ENCODE measurements at regions of chr10 and their contacts with region 1.

Region 1: DNA sequence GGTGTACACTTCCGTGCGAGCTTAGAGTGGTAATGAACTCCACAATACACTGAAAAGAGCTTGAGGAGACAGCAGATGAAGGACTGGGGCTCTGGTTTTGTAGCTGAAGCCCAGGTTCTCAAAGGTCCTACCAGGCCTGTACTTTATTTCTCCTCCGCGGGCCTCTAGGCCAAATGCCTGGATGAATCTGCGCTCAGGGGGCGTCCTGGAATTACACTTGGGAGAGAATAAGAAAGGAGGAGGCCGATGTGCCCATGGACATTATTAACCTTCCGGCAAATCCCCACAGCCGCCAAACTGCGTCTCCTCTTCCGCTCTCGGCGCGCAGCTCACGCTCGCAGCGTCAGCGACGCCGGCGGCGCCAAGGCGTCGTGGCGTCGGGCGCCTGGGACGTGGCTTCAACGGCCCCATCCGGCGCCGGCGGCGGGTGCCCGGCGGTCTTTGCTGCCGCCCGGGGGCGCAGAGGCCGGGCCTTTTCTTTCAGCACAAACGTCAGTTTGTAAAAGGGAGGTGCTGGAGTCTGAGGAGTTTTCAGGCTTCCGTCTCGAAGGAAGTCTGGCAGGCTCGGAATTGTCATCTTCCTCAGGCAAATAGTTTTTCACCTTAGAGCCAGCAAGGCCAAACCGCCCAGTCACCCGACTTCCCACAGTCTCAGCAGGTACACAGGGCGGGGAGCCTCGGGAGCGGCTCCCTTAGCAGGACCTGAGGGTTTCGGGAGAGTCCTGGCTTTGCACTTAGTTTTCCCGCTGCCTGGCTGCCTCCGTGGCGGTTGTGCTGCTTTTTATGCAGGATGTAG is at the start of gene CCDC7:
- DNase-seq: peak; percentile 74 to 96 (median 82)
- ATAC-seq: peak; percentile 95
- H3K4me3 ChIP-seq: peak within 1 kb of the TSS; percentile 96
- H3K4me3 Mint-ChIP-seq: peak within 1 kb of the TSS; percentile 94
- H3K27ac ChIP-seq: peak within 1 kb of the TSS; percentile 92 to 95
- H3K27ac Mint-ChIP-seq: peak within 1 kb of the TSS; percentile 97
- H3K4me1 ChIP-seq: peaks cover 8% of the 10 kb centered on the region
- H3K4me1 Mint-ChIP-seq: peaks cover 33% of the 10 kb centered on the region
- H3K27me3 ChIP-seq: no peaks in the 10 kb centered on the region
- H3K27me3 Mint-ChIP-seq: no peaks in the 10 kb centered on the region
- CTCF ChIP-seq: peak; percentile 64
- total RNA-seq, gene CCDC7: 69.4 to 72.9 TPM

Region 2: GRCh38 chr10:32055813-32056600 is 389.9 kb before region 1 on chr10 and contains the start of gene KIF5B:
- CTCF ChIA-PET with region 1: no interaction called
- POLR2A ChIA-PET with region 1: no interaction called
- intact Hi-C with region 1: loop called in 1 of 2 experiments (anchors 10 kb)
- DNase-seq: peak; percentile 74 to 95 (median 84)
- ATAC-seq: peak; percentile 79
- H3K4me3 ChIP-seq: peak within 1 kb of the TSS; percentile 98
- H3K4me3 Mint-ChIP-seq: peak within 1 kb of the TSS; percentile 95
- H3K27ac ChIP-seq: peak within 1 kb of the TSS; percentile 77 to 92
- H3K27ac Mint-ChIP-seq: peak within 1 kb of the TSS; percentile 95
- H3K4me1 ChIP-seq: peaks cover 18% of the 10 kb centered on the region
- H3K4me1 Mint-ChIP-seq: peaks cover 54% of the 10 kb centered on the region
- H3K27me3 ChIP-seq: no peaks in the 10 kb centered on the region
- H3K27me3 Mint-ChIP-seq: no peaks in the 10 kb centered on the region
- CTCF ChIP-seq: no peak
- total RNA-seq, gene KIF5B: 58.3 to 59.0 TPM

Region 3: GRCh38 chr10:32155042-32155531 is 290.9 kb before region 1 on chr10:
- CTCF ChIA-PET with region 1: no interaction called
- POLR2A ChIA-PET with region 1: no interaction called
- intact Hi-C with region 1: no loop called
- DNase-seq: no peak
- ATAC-seq: no peak
- H3K4me3 ChIP-seq: no peak overlapping the region
- H3K4me3 Mint-ChIP-seq: no peak overlapping the region
- H3K27ac ChIP-seq: no peak overlapping the region
- H3K27ac Mint-ChIP-seq: no peak overlapping the region
- H3K4me1 ChIP-seq: peaks cover 11% of the 10 kb centered on the region
- H3K4me1 Mint-ChIP-seq: peaks cover 30% of the 10 kb centered on the region
- H3K27me3 ChIP-seq: no peaks in the 10 kb centered on the region
- H3K27me3 Mint-ChIP-seq: no peaks in the 10 kb centered on the region
- CTCF ChIP-seq: no peak

Region 4: GRCh38 chr10:32256613-32257437 is 189.1 kb before region 1 on chr10:
- CTCF ChIA-PET with region 1: interaction called, 3 read pairs
- POLR2A ChIA-PET with region 1: no interaction called
- intact Hi-C with region 1: loop called in 1 of 2 experiments (anchors 10 kb)
- DNase-seq: peak; percentile 43 to 84 (median 62)
- ATAC-seq: peak; percentile 78
- H3K4me3 ChIP-seq: no peak overlapping the region
- H3K4me3 Mint-ChIP-seq: no peak overlapping the region
- H3K27ac ChIP-seq: no peak overlapping the region
- H3K27ac Mint-ChIP-seq: no peak overlapping the region
- H3K4me1 ChIP-seq: peaks cover 9% of the 10 kb centered on the region
- H3K4me1 Mint-ChIP-seq: peaks cover 5% of the 10 kb centered on the region
- H3K27me3 ChIP-seq: no peaks in the 10 kb centered on the region
- H3K27me3 Mint-ChIP-seq: no peaks in the 10 kb centered on the region
- CTCF ChIP-seq: peak; percentile 92

Region 5: DNA sequence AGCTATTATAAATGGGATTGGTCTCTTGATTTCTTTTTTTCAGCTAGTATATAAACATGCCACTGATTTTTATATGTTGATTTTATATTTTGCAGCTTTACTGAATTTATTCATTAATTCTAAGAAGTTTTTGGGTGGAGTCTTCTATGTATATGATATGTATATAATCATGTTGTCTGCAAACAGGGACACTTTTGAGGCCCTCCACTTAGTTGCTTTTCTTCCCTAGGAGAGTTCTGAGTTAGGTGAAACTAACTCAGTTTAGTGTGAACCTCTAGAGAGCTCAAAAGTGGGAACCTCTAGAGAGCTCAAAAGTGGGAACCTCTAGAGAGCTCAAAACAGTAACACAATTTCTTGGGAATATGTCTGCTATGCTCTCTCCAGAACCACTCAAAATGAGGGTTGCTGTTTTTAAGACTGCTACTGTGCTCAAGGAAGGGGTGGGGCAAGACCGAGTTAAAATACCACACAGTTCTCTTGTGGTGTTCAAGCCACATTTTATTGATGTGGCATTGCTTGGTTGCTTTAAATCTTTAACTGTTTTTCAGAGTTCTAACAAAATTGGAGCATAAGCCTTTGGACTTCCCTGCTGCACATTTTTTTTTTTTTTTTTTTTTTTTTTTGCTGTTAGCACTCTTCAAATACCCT is 13.2 kb after region 1 on chr10:
- CTCF ChIA-PET with region 1: interaction called, 5 read pairs
- POLR2A ChIA-PET with region 1: interaction called, 42 read pairs
- intact Hi-C with region 1: loop called (anchors 1 to 2 kb)
- DNase-seq: peak in 13 of 14 experiments; percentile 23 to 90 (median 43)
- ATAC-seq: peak; percentile 99
- H3K4me3 ChIP-seq: peak overlapping the region; percentile 9
- H3K4me3 Mint-ChIP-seq: peak overlapping the region; percentile 85
- H3K27ac ChIP-seq: no peak overlapping the region
- H3K27ac Mint-ChIP-seq: peak overlapping the region; percentile 95
- H3K4me1 ChIP-seq: peaks cover 11% of the 10 kb centered on the region
- H3K4me1 Mint-ChIP-seq: peaks cover 60% of the 10 kb centered on the region
- H3K27me3 ChIP-seq: no peaks in the 10 kb centered on the region
- H3K27me3 Mint-ChIP-seq: no peaks in the 10 kb centered on the region
- CTCF ChIP-seq: no peak

Region 6: GRCh38 chr10:33487014-33487776 is 1041.3 kb after region 1 on chr10:
- CTCF ChIA-PET with region 1: no interaction called
- POLR2A ChIA-PET with region 1: no interaction called
- intact Hi-C with region 1: no loop called
- DNase-seq: peak in 1 of 14 experiments; percentile 43
- ATAC-seq: no peak
- H3K4me3 ChIP-seq: peak overlapping the region; percentile 28
- H3K4me3 Mint-ChIP-seq: peak overlapping the region; percentile 39
- H3K27ac ChIP-seq: no peak overlapping the region
- H3K27ac Mint-ChIP-seq: no peak overlapping the region
- H3K4me1 ChIP-seq: no peaks in the 10 kb centered on the region
- H3K4me1 Mint-ChIP-seq: peaks cover 11% of the 10 kb centered on the region
- H3K27me3 ChIP-seq: no peaks in the 10 kb centered on the region
- H3K27me3 Mint-ChIP-seq: peaks cover 4% of the 10 kb centered on the region
- CTCF ChIP-seq: no peak

Measured in CD4-positive, alpha-beta T cell (primary cell).